Prostate gland (tissue), 2 donors: ENCODE measurements at regions of chr9 and their contacts with region 1.

Region 1: DNA sequence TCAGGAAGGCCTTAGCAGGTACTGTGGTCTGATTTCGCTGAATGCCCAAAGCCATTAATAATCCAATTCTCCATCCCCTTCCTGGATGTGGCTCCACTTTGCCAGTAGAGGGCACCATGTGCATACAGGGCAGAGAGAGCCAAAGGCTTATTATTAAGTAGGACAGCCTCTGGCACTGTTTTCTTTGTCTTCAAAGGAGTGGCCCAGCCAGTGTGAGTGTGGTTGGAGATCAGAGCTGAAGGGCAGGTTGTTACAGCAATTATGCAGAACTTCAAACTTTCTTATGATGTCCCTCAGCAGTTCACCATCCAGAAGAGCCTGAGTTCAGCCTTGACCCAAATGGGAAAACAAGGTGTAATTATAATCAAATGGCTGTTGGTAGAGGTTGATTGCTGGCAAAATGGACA is 38.6 kb upstream of the CEMIP2 start:
- DNase-seq: peak; percentile 63
- H3K4me3 ChIP-seq: no peak overlapping the region
- H3K27ac ChIP-seq: no peak overlapping the region
- H3K4me1 ChIP-seq: no peaks in the 10 kb centered on the region
- H3K27me3 ChIP-seq: no peaks in the 10 kb centered on the region
- CTCF ChIP-seq: peak; percentile 45 to 81 (median 66)
- POLR2A ChIP-seq: no peak

Region 2: DNA sequence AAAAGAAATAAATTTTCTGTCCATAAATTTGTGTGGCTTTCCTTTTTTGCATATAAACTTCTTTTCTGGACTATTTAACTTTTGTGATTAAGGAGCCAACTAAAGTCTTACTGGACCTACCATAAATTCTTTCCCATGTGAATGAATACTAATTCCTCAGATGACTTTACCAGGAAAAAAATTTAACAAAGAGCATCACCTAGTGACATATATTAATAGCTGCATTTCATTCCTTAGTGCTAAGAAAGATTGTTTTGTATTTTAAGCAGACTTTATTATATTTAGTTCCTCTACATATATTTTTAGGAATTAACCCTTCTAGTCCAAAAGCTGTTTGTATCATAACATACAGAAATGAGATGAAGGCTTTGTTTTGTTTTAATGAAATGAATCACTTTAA is 168.9 kb after region 1 on chr9:
- intact Hi-C with region 1: loop called (anchors 5 kb)
- DNase-seq: no peak
- H3K4me3 ChIP-seq: no peak overlapping the region
- H3K27ac ChIP-seq: no peak overlapping the region
- H3K4me1 ChIP-seq: no peaks in the 10 kb centered on the region
- H3K27me3 ChIP-seq: no peaks in the 10 kb centered on the region
- CTCF ChIP-seq: peak in 3 of 4 experiments; percentile 27 to 57 (median 56)
- POLR2A ChIP-seq: no peak

Region 3: GRCh38 chr9:72025931-72026342 is 219.0 kb after region 1 on chr9:
- intact Hi-C with region 1: loop called (anchors 5 kb)
- DNase-seq: no peak
- H3K4me3 ChIP-seq: no peak overlapping the region
- H3K27ac ChIP-seq: no peak overlapping the region
- H3K4me1 ChIP-seq: no peaks in the 10 kb centered on the region
- H3K27me3 ChIP-seq: no peaks in the 10 kb centered on the region
- CTCF ChIP-seq: no peak
- POLR2A ChIP-seq: no peak

Region 4: DNA sequence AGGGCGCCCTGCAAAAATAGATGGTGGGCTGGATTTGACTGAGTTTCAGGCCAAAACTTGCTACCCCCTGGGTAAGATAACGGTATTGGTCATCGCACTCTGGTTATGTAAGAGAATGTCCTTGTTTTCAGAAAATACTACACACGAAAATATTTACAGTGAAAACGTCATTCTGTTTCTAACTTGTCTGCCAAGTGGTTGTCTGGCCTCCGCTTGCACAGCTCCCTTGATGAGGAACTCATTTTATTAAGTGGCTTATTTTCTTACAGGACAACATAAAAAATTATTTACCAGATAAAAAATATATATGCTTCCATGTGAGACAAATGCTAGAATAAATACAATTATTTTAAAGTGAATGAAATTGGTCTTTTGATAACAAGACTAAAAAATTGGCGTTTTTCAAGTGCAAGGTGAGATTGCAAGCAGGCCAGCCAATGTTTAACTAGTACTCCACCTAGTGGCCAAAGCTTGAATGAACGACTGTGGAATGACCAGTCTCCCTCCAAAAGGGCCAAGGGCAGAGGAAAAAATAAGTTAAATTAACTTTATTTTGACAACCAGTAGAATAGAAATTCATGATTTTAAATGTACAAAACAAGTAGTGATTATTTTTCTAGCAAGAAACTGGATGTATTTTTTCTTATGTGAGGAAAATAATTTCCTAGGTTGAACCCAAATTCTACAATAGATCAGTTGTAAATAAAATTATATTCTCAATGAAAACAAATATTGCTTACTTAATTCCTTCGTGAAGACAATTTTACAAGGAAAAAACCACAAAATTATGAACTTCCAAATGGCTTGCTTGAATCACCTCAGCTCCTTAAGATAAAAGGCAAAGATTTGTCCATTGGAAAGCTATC is 464.9 kb after region 1 on chr9:
- intact Hi-C with region 1: loop called (anchors 10 kb)
- DNase-seq: peak; percentile 51
- H3K4me3 ChIP-seq: no peak overlapping the region
- H3K27ac ChIP-seq: no peak overlapping the region
- H3K4me1 ChIP-seq: no peaks in the 10 kb centered on the region
- H3K27me3 ChIP-seq: no peaks in the 10 kb centered on the region
- CTCF ChIP-seq: peak; percentile 75 to 89 (median 80)
- POLR2A ChIP-seq: no peak